SK-N-SH (cell line): ENCODE measurements at regions of chr1 and their contacts with region 1.

Region 1: GRCh38 chr1:117758444-117759316 is 152.8 kb downstream of the TENT5C start:
- DNase-seq: peak; percentile 78
- H3K4me3 ChIP-seq: peak overlapping the region; percentile 46 to 53
- H3K27ac ChIP-seq: no peak overlapping the region; a peak in 1 of 4 replicates
- H3K4me1 ChIP-seq: peaks cover 0 to 12% of the 10 kb centered on the region in 2 experiments; a peak in 1 of 4 replicates
- H3K27me3 ChIP-seq: no peaks in the 10 kb centered on the region
- CTCF ChIP-seq: peak; percentile 86
- EP300 ChIP-seq: no peak
- RAD21 ChIP-seq: peak; percentile 83

Region 2: GRCh38 chr1:117527566-117528102 is 231.0 kb before region 1 on chr1:
- CTCF ChIA-PET with region 1: interaction called, 192 read pairs
- POLR2A ChIA-PET with region 1: no interaction called
- DNase-seq: no peak
- H3K4me3 ChIP-seq: no peak overlapping the region
- H3K27ac ChIP-seq: peak overlapping the region in 1 of 2 experiments; percentile 19; a peak in 1 of 4 replicates
- H3K4me1 ChIP-seq: no peaks in the 10 kb centered on the region
- H3K27me3 ChIP-seq: no peaks in the 10 kb centered on the region
- CTCF ChIP-seq: no peak
- EP300 ChIP-seq: no peak
- RAD21 ChIP-seq: no peak

Region 3: DNA sequence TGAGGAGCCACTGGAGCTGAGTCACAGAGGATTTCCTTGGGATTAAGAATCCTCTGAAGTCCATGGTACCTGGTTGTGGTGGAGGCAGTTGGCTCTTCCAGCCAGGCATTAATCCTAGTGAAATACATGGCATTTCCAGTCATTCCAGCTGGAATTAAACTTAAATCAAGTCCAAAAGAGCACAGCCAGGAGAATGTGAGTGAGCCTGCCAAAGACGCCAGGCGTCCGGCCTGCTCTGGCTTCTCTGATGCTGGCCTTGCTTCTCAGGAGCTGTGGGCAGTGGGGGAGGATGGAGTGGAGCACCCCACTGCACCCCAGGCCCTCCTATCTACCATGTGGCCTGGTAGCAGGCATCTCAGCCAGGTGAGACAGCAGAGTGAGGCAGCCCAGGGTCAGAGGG is 176.2 kb before region 1 on chr1:
- CTCF ChIA-PET with region 1: interaction called, 13 read pairs
- POLR2A ChIA-PET with region 1: no interaction called
- DNase-seq: no peak
- H3K4me3 ChIP-seq: no peak overlapping the region
- H3K27ac ChIP-seq: no peak overlapping the region
- H3K4me1 ChIP-seq: no peaks in the 10 kb centered on the region
- H3K27me3 ChIP-seq: no peaks in the 10 kb centered on the region
- CTCF ChIP-seq: no peak
- EP300 ChIP-seq: no peak
- RAD21 ChIP-seq: no peak

Region 4: GRCh38 chr1:117685936-117686806 is 72.5 kb before region 1 on chr1:
- CTCF ChIA-PET with region 1: interaction called, 27 read pairs
- POLR2A ChIA-PET with region 1: no interaction called
- DNase-seq: no peak
- H3K4me3 ChIP-seq: no peak overlapping the region
- H3K27ac ChIP-seq: no peak overlapping the region
- H3K4me1 ChIP-seq: peaks cover 0 to 2% of the 10 kb centered on the region in 2 experiments; a peak in 1 of 4 replicates
- H3K27me3 ChIP-seq: no peaks in the 10 kb centered on the region
- CTCF ChIP-seq: 0 out of 2 replicates have a peak, but pooled peaks have one; percentile 16
- EP300 ChIP-seq: no peak
- RAD21 ChIP-seq: 0 out of 2 replicates have a peak, but pooled peaks have one; percentile 9

Region 5: GRCh38 chr1:117770981-117771531 is 12.4 kb after region 1 on chr1:
- CTCF ChIA-PET with region 1: interaction called, 10 read pairs
- POLR2A ChIA-PET with region 1: no interaction called
- DNase-seq: no peak
- H3K4me3 ChIP-seq: no peak overlapping the region
- H3K27ac ChIP-seq: no peak overlapping the region
- H3K4me1 ChIP-seq: no peaks in the 10 kb centered on the region
- H3K27me3 ChIP-seq: no peaks in the 10 kb centered on the region
- CTCF ChIP-seq: no peak
- EP300 ChIP-seq: no peak
- RAD21 ChIP-seq: no peak

Region 6: DNA sequence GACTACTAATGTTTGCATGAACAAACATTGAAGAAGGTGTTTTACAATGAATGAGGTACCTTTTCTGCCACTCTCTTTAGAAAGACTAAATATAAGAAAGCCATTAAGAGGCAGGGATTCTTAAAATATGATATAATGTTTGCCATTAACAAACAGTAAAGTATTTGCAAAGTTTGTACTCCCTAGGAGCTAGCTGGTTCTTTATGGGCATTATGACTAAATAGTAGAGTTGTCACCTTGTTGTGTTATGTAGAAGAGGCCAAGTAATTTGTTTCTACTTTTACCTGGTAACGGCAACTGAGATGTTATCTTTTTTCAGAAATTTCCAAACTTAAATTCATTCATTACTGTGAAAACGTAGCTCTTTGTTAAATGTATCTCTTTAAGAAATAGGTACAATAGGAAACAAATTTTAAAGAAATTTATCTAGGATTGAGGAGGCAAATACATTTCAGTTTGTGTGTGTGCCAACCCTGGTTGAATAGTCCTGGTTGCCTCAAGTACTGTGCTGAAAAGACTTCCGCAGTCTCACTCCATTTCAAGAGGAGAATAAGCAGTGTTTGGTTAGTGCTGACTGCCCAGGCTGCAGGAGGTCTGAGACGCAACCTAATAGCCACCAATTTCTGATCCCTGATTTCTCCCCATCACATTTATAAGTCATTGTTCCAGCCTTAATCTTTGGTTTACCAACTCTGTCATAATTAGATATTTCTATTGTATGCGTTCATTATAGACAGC is 222.9 kb after region 1 on chr1:
- CTCF ChIA-PET with region 1: no interaction called
- POLR2A ChIA-PET with region 1: no interaction called
- DNase-seq: no peak
- H3K4me3 ChIP-seq: no peak overlapping the region
- H3K27ac ChIP-seq: no peak overlapping the region
- H3K4me1 ChIP-seq: no peaks in the 10 kb centered on the region
- H3K27me3 ChIP-seq: no peaks in the 10 kb centered on the region; the same call in 1 of the 2 replicates
- CTCF ChIP-seq: no peak
- EP300 ChIP-seq: no peak
- RAD21 ChIP-seq: no peak